ENCODE measurements at regions of chr15 and their contacts with region 1.

Region 1: DNA sequence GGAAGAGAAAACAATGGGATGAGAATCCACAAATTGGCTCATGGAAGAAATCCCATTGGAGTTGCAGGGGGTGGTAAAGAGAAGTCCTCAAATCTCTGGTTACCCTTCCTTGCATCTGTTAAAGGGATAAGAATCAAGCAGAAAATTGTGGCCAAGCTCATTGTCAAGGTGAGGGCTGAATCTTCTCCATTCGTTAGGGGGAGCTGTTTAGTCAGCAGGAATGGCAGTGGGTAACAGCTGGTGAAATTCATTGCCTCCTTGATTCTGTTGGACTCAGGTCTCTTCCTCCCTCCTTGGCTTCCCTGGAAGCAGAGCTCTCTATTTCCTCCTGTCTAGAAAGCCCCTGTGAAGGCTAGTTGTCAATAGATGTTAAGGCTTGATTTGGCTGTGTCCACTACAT is 343.1 kb upstream of the SEMA6D start:
- DNase-seq: peak; percentile 52
- H3K4me3 ChIP-seq: no peak overlapping the region
- H3K27ac ChIP-seq: no peak overlapping the region
- H3K4me1 ChIP-seq: no peaks in the 10 kb centered on the region
- H3K27me3 ChIP-seq: no peaks in the 10 kb centered on the region
- CTCF ChIP-seq: peak; percentile 36 to 49
- POLR2A ChIP-seq: no peak

Region 2: DNA sequence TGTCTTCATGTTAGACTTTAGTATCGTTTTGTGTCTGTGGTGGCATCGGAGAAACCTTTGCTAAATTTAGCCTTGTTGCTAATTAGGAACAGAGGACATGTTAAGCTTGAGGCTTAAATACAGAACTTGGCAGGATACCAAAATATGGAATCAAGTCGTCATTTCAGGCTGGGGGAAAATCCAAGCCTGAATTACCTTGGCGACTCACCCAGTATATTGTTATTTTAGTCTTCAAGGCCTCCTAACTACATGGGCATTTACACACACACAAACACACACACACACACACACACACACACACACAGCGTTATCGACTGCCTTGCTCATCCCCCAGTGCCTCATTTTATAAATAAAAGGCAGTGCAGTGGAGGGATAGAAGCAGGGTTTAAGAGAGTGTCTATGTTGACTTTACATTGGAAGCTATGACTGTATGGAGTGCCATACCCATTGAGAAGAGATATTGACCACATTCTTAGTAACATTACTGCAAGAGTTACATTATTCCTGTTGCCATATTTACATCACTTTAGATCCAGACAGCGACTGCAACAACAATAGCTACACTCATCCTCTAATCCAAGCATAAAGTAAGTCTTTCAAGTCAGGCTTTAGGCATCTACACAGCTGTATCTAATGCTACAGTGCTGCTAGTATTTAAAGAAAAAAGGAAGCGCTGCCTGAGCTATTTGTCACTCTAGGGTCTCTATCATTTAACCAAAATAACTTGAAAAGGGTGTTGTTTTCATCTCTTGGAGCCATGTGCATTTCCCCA is 132.3 kb after region 1 on chr15:
- CTCF ChIA-PET with region 1: no interaction called
- POLR2A ChIA-PET with region 1: no interaction called
- dilution Hi-C with region 1: no loop called
- intact Hi-C with region 1: no loop called
- DNase-seq: peak; percentile 43
- H3K4me3 ChIP-seq: no peak overlapping the region
- H3K27ac ChIP-seq: no peak overlapping the region
- H3K4me1 ChIP-seq: peaks cover 2% of the 10 kb centered on the region
- H3K27me3 ChIP-seq: no peaks in the 10 kb centered on the region
- CTCF ChIP-seq: no peak
- POLR2A ChIP-seq: no peak

Region 3: GRCh38 chr15:47773163-47773562 is 398.9 kb after region 1 on chr15:
- CTCF ChIA-PET with region 1: no interaction called
- POLR2A ChIA-PET with region 1: no interaction called
- dilution Hi-C with region 1: no loop called
- intact Hi-C with region 1: loop called (anchors 10 kb)
- DNase-seq: no peak
- H3K4me3 ChIP-seq: no peak overlapping the region
- H3K27ac ChIP-seq: no peak overlapping the region
- H3K4me1 ChIP-seq: no peaks in the 10 kb centered on the region
- H3K27me3 ChIP-seq: no peaks in the 10 kb centered on the region
- CTCF ChIP-seq: no peak
- POLR2A ChIP-seq: no peak